ENCODE measurements at regions of chr14 and their contacts with region 1.

Region 1: DNA sequence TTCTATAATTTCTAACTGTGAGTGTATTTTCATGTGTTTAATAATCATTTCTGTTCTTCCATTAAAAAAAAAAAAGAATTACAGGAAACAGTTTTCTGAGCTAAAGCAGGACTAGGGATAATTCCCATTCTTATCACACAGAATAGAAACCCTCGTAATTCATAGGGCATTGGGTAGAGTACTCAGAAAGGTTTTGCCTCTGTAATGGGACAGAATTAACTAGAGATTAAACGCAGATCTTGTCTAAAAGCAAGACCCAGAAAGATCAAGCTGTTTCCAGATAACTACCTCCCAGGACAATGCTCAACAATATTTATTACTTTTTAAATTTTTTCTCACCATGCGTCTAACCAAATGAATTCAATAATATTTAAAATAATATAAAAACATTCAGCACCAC is 10.2 kb downstream of the GSKIP start:
- DNase-seq: no peak
- H3K4me3 ChIP-seq: no peak overlapping the region
- H3K27ac ChIP-seq: no peak overlapping the region
- H3K4me1 ChIP-seq: no peaks in the 10 kb centered on the region
- H3K27me3 ChIP-seq: no peaks in the 10 kb centered on the region
- CTCF ChIP-seq: no peak
- POLR2A ChIP-seq: no peak

Region 2: DNA sequence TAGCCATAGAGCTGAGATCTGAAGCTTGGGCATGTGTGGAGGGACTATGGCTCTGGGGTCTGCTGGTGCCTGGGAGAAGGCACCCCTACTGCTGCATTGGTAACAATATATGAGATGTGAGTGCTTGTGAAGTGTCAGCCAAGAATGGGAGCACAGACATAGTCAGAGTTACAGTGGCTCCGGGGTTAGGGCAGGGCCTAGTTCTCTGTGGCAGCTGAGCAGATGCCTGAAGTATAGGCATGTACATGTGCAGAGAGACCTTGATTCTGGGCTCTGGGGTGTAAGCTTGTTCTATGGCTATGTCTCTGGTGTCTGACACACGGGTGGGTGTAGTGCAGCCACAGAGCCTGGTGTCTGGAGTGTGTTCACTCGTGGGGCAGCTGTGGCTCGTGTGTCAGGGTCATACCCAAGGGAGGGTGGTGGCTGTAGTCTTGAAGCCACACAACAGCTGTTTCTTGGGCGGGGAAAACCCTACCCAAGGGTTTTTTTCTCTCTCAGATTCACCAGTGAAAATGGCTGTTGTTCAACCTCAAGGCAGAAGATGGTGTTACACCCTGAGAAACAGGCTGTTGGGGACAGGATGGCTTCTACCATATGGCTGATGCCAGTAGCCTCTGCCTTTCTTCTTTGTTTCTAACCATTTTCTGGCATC is 647.7 kb before region 1 on chr14:
- intact Hi-C with region 1: no loop called
- DNase-seq: no peak
- H3K4me3 ChIP-seq: no peak overlapping the region
- H3K27ac ChIP-seq: no peak overlapping the region
- H3K4me1 ChIP-seq: no peaks in the 10 kb centered on the region
- H3K27me3 ChIP-seq: no peaks in the 10 kb centered on the region
- CTCF ChIP-seq: no peak
- POLR2A ChIP-seq: no peak

Region 3: DNA sequence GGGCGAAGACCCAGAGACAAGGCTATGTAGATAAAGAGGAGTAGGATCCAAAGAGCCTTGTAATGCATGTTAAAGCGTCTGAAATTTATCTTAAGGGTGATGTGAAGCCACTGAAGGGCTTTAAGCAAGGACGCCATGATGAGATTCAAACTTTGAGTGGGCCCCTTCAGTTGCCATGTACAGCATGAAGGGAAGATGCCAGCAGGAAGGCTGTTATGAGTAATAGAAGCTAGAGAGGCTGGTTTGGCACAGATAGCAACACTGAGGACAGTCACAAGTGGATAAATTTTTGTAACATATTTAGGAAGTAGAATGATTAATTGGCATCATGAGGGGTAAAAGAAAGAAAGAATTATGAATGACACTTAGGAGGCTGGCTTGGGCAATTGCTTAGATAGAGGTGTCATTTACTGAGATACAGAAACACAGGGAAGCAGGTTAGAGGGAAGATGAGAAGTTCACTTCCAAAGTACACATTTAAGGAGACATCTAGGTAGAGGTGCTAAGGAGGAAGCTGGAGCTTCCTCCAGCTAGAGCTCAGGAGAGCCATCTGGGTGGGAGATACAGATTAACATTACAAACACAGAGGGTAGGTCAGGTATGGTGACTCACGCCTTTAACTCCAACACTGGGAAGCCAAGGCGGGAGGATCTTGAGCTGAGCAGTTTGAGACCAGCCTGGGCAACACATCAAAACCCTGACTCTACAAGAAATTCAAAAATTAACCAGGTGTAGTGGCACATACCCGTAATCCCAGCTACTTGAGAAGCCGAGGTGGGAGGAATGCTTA is 24.1 kb before region 1 on chr14:
- intact Hi-C with region 1: no loop called
- DNase-seq: no peak
- H3K4me3 ChIP-seq: no peak overlapping the region
- H3K27ac ChIP-seq: no peak overlapping the region
- H3K4me1 ChIP-seq: no peaks in the 10 kb centered on the region
- H3K27me3 ChIP-seq: no peaks in the 10 kb centered on the region
- CTCF ChIP-seq: no peak
- POLR2A ChIP-seq: no peak

Region 4: GRCh38 chr14:96400495-96400894 is 27.0 kb after region 1 on chr14:
- intact Hi-C with region 1: loop called (anchors 2 kb)
- DNase-seq: no peak
- H3K4me3 ChIP-seq: no peak overlapping the region
- H3K27ac ChIP-seq: no peak overlapping the region
- H3K4me1 ChIP-seq: no peaks in the 10 kb centered on the region
- H3K27me3 ChIP-seq: no peaks in the 10 kb centered on the region
- CTCF ChIP-seq: no peak
- POLR2A ChIP-seq: no peak

Measured in breast epithelium (tissue), 4 donors.